ENCODE measurements at regions of chr1 and their contacts with region 1.

Region 1: GRCh38 chr1:117093870-117094621 is 27.5 kb downstream of the TRIM45 start:
- DNase-seq: no peak
- H3K4me3 ChIP-seq: no peak overlapping the region
- H3K27me3 ChIP-seq: no peaks in the 10 kb centered on the region
- CTCF ChIP-seq: peak; percentile 37

Region 2: DNA sequence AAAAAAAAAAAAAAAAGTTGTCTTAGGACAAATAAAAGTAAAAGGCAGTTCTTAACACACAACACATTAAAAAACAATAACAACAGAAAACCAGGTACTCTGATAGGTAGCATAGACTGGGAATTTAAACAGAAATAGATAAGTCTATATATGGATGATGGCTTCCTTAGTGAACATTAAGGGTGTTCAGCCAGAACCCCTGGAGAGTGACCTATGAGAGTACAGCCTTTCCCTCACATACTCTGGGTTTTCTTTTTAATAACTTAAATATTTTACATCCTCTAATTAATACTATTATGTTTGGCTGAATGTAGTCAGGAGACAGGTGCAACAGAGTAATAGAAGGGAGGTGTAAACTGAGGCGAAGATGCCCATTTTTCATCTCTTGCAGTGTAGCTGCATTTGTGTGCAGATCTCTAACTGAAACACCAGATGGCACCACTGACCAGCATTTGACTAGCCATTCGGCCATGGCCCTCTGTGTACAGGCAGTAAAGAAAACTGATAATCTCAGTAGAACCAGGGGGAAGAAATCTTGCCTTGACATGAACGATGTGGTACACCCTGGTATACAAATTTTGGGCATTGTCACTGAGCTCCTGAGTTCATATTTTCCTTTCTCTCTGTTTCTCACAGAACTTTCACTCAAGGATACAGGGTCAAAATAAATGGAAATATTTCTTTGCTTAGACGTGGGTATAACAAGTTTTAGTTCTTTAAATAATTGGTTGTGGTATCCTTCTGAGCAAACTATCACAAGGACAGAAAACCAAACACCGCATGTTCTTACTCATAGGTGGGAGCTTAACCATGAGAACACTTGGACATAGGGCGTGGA is 26.3 kb before region 1 on chr1:
- CTCF ChIA-PET with region 1: interaction called, 18 read pairs
- POLR2A ChIA-PET with region 1: no interaction called
- DNase-seq: no peak
- H3K4me3 ChIP-seq: no peak overlapping the region
- H3K27me3 ChIP-seq: no peaks in the 10 kb centered on the region
- CTCF ChIP-seq: peak; percentile 76

Region 3: GRCh38 chr1:117106478-117106877 is 12.4 kb after region 1 on chr1:
- CTCF ChIA-PET with region 1: interaction called, 17 read pairs
- POLR2A ChIA-PET with region 1: no interaction called
- DNase-seq: no peak
- H3K4me3 ChIP-seq: no peak overlapping the region
- H3K27me3 ChIP-seq: no peaks in the 10 kb centered on the region
- CTCF ChIP-seq: no peak

Region 4: DNA sequence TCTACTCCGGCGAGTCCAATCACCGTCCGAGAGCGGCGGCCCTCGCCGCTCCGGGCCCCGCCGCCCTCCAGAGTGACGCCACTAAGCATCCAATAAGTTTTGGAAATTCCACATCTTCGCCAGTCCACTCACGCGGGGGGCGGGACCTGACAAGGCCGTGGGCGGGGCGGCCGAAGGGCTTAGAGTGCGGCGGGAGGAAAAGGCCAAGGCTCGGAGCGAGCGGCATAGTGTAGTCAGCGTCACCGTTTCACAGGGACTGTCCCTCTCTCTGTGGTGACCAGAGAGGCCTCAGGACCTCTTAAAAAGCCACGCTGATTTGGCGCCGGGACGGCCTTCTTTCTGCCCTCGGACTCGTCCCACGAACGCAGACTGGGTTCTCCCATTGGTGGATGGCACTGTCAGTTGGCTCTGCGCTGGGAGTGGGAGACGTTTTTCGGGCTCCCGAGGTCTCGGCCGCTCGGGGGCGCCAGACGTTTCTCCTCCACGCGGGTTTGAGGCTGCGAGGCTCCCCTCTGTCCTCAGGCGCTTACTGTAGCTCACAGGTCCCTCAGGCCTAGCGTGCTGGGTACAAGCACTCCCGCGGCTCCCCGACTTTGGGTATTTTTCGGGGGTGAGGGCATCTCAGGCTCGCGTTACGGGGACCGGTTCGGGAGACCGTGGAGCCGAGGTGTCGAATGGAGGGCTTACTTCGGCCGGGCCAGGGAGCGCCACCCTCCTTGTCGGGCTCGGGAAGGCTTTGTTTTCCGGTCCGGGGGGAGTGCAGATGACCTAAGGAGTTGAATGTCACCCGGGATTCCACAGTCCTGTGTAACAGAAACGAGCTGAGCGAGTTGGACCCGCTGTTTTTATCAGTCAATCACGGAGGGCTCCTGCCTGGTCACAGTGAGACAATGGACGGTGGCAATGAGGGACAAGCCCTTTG is 28.0 kb after region 1 on chr1:
- CTCF ChIA-PET with region 1: interaction called, 27 read pairs
- POLR2A ChIA-PET with region 1: no interaction called
- DNase-seq: peak; percentile 90
- H3K4me3 ChIP-seq: peak overlapping the region; percentile 73
- H3K27me3 ChIP-seq: no peaks in the 10 kb centered on the region
- CTCF ChIP-seq: peak; percentile 92

Measured in BJ (cell line).